Brain microvascular endothelial cell (primary cell): ENCODE measurements at regions of chr21 and their contacts with region 1.

Region 1: GRCh38 chr21:41612674-41613532 is 104.9 kb upstream of the TMPRSS2 start:
- DNase-seq: peak; percentile 42
- H3K4me3 ChIP-seq: no peak overlapping the region
- H3K27ac ChIP-seq: no peak overlapping the region
- H3K27me3 ChIP-seq: no peaks in the 10 kb centered on the region
- CTCF ChIP-seq: peak; percentile 83

Region 2: DNA sequence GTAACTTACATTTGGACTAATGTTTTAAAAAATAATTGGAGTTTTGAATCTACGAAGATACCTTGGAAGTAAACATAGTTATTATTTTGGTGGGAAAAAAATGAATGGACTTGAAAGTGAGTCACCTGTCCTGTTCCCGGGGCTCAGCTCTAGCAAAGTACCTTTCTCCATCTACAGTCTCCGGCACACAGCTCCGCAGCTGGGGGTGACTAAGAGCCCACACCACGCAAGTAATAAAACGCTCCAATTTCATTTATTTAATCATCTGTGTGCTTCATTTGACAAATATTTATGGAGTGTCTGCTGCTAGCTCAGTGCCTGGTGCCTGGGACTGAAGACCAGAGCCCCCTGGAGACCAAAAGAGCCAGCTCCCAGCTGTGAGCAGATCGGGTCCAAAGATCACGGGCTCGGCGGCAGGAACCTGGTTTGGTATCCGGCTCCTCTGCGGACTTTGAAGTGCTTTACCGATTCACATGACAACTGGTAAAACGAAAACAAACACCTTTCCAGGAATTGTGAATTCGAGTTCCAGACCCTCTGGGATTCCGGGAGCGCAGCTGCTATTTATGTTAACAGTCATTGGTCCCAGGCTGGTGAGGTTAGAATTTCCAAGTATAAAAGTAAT is 155.6 kb after region 1 on chr21:
- in situ Hi-C with region 1: loop called (anchors 10 kb)
- DNase-seq: peak; percentile 60
- H3K4me3 ChIP-seq: peak overlapping the region; percentile 34
- H3K27ac ChIP-seq: no peak overlapping the region
- H3K27me3 ChIP-seq: peaks cover 34% of the 10 kb centered on the region
- CTCF ChIP-seq: peak; percentile 75